HCT116 (cell line): ENCODE measurements at regions of chr9 and their contacts with region 1.

Region 1: GRCh38 chr9:15104826-15105420 is 194.7 kb upstream of the FREM1 start:
- DNase-seq: peak; percentile 16
- ATAC-seq: peak; percentile 92
- H3K4me3 ChIP-seq: no peak overlapping the region
- H3K27ac ChIP-seq: no peak overlapping the region
- H3K4me1 ChIP-seq: no peaks in the 10 kb centered on the region
- H3K27me3 ChIP-seq: peaks cover 9% of the 10 kb centered on the region; the same call in 1 of the 2 replicates
- CTCF ChIP-seq: peak; percentile 54 to 74 (median 74); a peak in 5 of 6 replicates
- POLR2A ChIP-seq: no peak
- RAD21 ChIP-seq: peak; percentile 52

Region 2: DNA sequence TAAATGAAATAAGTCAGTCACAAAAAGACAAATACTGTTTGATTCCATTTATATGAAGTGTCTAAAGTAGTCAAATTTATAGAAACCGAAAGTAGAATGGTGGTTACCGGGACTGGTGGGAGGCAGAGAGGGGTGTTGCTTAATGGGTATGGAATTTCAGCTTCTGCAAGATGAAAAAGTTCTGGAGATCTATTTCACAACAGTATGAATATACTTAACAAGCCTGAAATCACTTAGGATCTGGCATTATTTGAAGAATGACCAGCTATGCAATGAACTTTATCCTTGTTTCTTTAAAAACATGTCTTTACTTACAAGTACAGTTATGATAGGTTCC is 180.1 kb before region 1 on chr9:
- CTCF ChIA-PET with region 1: no interaction called
- POLR2A ChIA-PET with region 1: no interaction called
- RAD21 ChIA-PET with region 1: no interaction called
- intact Hi-C with region 1: no loop called
- DNase-seq: no peak
- ATAC-seq: no peak
- H3K4me3 ChIP-seq: no peak overlapping the region
- H3K27ac ChIP-seq: no peak overlapping the region
- H3K4me1 ChIP-seq: no peaks in the 10 kb centered on the region
- H3K27me3 ChIP-seq: 0 out of 2 replicates have a peak, but pooled peaks cover 5% of the 10 kb centered on the region
- CTCF ChIP-seq: no peak
- POLR2A ChIP-seq: no peak
- RAD21 ChIP-seq: no peak

Region 3: GRCh38 chr9:15088204-15088603 is 16.7 kb before region 1 on chr9:
- CTCF ChIA-PET with region 1: no interaction called
- POLR2A ChIA-PET with region 1: no interaction called
- RAD21 ChIA-PET with region 1: no interaction called
- intact Hi-C with region 1: no loop called
- DNase-seq: no peak
- ATAC-seq: no peak
- H3K4me3 ChIP-seq: no peak overlapping the region
- H3K27ac ChIP-seq: no peak overlapping the region
- H3K4me1 ChIP-seq: no peaks in the 10 kb centered on the region
- H3K27me3 ChIP-seq: 0 out of 2 replicates have a peak, but pooled peaks cover 12% of the 10 kb centered on the region
- CTCF ChIP-seq: no peak
- POLR2A ChIP-seq: no peak
- RAD21 ChIP-seq: no peak

Region 4: DNA sequence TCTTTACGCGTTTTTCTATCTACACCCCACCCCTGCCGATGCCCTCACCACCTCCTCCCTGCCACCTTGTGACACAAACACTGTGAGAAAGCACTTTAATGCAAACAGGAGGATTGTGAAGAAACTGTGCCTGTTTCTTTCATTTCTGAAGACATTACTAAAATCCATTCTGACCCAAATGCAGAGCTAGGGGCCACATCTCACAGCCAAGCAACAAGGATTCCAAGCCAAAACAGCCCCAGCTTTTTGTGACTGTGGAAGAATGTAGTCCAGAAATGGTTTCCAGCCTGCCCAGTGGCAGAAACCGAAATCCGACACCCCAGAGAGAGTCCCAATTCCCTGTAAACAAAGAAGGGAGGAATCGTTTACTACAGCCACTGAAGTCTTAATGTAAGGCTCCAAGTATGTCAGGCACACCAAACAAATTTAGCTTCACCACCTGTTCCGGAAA is 11.2 kb after region 1 on chr9:
- CTCF ChIA-PET with region 1: no interaction called
- POLR2A ChIA-PET with region 1: no interaction called
- RAD21 ChIA-PET with region 1: no interaction called
- intact Hi-C with region 1: no loop called
- DNase-seq: no peak
- ATAC-seq: no peak
- H3K4me3 ChIP-seq: no peak overlapping the region
- H3K27ac ChIP-seq: no peak overlapping the region
- H3K4me1 ChIP-seq: no peaks in the 10 kb centered on the region
- H3K27me3 ChIP-seq: peaks cover 48% of the 10 kb centered on the region
- CTCF ChIP-seq: no peak
- POLR2A ChIP-seq: no peak
- RAD21 ChIP-seq: no peak

Region 5: DNA sequence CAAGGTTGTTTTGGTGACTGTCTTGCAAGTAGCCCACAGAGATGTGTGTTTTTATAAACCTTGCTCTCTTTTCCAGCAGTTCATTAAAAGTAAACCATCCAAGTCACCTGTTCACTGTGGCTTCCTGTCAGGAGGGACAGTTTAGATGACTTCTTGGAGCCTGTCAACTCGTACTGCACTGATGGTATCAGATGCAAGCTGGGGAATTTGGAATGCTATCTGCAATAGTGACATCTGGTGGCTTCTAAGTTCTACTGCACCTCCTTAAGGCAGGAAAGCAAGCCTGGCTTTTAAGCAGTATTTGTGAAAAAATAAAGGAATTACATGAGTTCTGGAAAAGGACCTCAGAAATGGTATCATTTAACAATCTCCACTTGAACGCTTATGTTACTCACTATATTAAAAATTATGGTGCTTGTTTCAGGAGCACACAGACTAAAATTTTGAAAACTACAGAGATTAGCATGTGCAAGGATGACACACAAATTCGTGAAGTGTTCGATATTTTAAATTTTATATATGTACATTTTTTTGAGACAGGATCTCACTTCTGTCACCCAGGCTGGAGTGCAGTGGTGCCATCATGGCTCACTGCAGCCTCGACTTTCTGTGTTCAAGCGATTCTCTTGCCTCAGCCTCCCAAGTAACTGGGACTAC is 38.1 kb after region 1 on chr9:
- CTCF ChIA-PET with region 1: interaction called, 3 read pairs
- POLR2A ChIA-PET with region 1: no interaction called
- RAD21 ChIA-PET with region 1: no interaction called
- intact Hi-C with region 1: loop called (anchors 2 kb)
- DNase-seq: peak; percentile 65
- ATAC-seq: peak; percentile 93
- H3K4me3 ChIP-seq: no peak overlapping the region
- H3K27ac ChIP-seq: no peak overlapping the region
- H3K4me1 ChIP-seq: peaks cover 0 to 7% of the 10 kb centered on the region in 2 experiments; a peak in 1 of 4 replicates
- H3K27me3 ChIP-seq: no peaks in the 10 kb centered on the region
- CTCF ChIP-seq: peak; percentile 47 to 85 (median 84); a peak in 5 of 6 replicates
- POLR2A ChIP-seq: no peak
- RAD21 ChIP-seq: peak; percentile 60

Region 6: DNA sequence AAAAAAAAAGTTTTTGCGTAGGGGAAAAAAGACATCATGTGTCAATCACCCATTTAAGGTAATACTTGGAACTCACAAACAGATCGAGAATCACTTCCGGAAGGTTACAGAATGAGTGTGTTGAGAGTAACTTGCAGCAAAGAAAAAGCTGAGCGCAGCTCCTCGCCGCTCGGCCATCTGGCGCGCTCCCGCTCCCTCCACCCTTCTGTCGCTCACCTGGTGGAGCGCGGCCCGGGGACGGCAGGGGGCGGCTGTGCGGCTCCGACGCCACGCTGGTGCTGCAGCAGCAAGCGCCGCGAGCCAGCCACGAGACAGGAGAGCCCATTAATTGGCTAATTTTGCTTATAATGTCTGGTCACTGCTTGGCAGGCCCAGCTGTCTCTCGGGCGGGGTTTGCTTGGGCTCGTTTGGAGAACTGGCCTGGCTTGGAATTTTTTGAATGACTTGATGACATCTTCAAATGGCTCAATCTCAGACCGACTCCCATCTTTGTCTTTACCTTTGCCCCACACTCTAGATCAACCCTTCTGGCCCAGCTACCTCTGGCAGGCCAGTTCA is 1049.7 kb after region 1 on chr9:
- CTCF ChIA-PET with region 1: no interaction called
- POLR2A ChIA-PET with region 1: no interaction called
- RAD21 ChIA-PET with region 1: no interaction called
- intact Hi-C with region 1: no loop called
- DNase-seq: no peak
- ATAC-seq: peak; percentile 98
- H3K4me3 ChIP-seq: no peak overlapping the region
- H3K27ac ChIP-seq: no peak overlapping the region
- H3K4me1 ChIP-seq: peaks cover 0 to 9% of the 10 kb centered on the region in 2 experiments; a peak in 1 of 4 replicates
- H3K27me3 ChIP-seq: no peaks in the 10 kb centered on the region
- CTCF ChIP-seq: peak; percentile 3 to 44 (median 40); a peak in 4 of 6 replicates
- POLR2A ChIP-seq: no peak
- RAD21 ChIP-seq: peak; percentile 30; the same call in 1 of the 2 replicates